ENCODE measurements at regions of chr1 and their contacts with region 1.

Region 1: GRCh38 chr1:41812051-41812450 is 106.7 kb downstream of the HIVEP3 start:
- DNase-seq: peak; percentile 67 to 74 (median 70)
- ATAC-seq: peak; percentile 93
- H3K4me3 ChIP-seq: no peak overlapping the region
- H3K27ac ChIP-seq: no peak overlapping the region
- H3K4me1 ChIP-seq: no peaks in the 10 kb centered on the region
- H3K27me3 ChIP-seq: peaks cover 2 to 13% of the 10 kb centered on the region in 2 experiments; a peak in 3 of 5 replicates
- CTCF ChIP-seq: peak; percentile 64 to 81 (median 80)
- EP300 ChIP-seq: no peak
- POLR2A ChIP-seq: no peak
- RAD21 ChIP-seq: peak; percentile 43 to 79

Region 2: GRCh38 chr1:42137766-42138165 is 325.7 kb after region 1 on chr1:
- CTCF ChIA-PET with region 1: no interaction called
- POLR2A ChIA-PET with region 1: no interaction called
- in situ Hi-C with region 1: loop called (anchors 25 kb)
- intact Hi-C with region 1: loop called (anchors 10 kb)
- DNase-seq: no peak
- ATAC-seq: no peak
- H3K4me3 ChIP-seq: no peak overlapping the region
- H3K27ac ChIP-seq: no peak overlapping the region
- H3K4me1 ChIP-seq: no peaks in the 10 kb centered on the region
- H3K27me3 ChIP-seq: peaks cover 27 to 46% of the 10 kb centered on the region in 2 experiments
- CTCF ChIP-seq: no peak
- EP300 ChIP-seq: no peak
- POLR2A ChIP-seq: no peak
- RAD21 ChIP-seq: no peak

Measured in K562 (cell line).